ENCODE measurements at regions of chr15 and their contacts with region 1.

Region 1: GRCh38 chr15:68783226-68784058 is 37.3 kb downstream of the ANP32A start:
- DNase-seq: peak; percentile 31
- H3K4me3 Mint-ChIP-seq: no peak overlapping the region
- H3K27ac Mint-ChIP-seq: peak overlapping the region; percentile 87
- H3K4me1 Mint-ChIP-seq: peaks cover 49% of the 10 kb centered on the region
- H3K27me3 Mint-ChIP-seq: no peaks in the 10 kb centered on the region

Region 2: GRCh38 chr15:68730471-68730919 is 52.9 kb before region 1 on chr15:
- intact Hi-C with region 1: loop called (anchors 5 kb)
- DNase-seq: no peak
- H3K4me3 Mint-ChIP-seq: no peak overlapping the region
- H3K27ac Mint-ChIP-seq: no peak overlapping the region
- H3K4me1 Mint-ChIP-seq: peaks cover 5% of the 10 kb centered on the region
- H3K27me3 Mint-ChIP-seq: peaks cover 11% of the 10 kb centered on the region

Region 3: DNA sequence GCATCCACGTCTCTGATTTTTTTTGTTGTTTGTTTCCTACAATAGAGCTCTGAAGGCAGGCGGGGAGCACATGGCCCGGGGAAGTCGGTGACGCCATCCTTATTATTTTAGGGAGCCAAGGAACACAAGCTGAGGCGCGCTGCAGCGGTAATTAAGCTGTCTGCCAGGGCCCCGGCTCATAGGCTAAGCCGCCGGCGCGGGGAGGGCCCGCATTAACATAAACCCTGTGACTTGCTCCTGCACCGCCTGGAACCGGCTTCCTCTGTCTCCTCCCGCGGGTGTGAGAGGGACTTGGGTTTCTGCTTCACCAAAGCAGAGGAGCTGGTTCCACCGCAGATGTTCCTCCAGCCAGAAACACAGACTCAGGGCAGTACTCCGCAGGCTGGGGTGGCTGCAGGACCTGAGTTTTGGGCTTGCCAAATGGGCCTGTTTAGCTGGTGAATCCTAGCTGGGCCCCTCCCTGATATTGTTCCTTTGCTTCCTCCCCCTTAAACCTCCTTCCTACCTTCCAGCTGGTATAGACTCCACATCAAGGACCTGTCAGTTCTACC is 11.9 kb after region 1 on chr15:
- intact Hi-C with region 1: loop called (anchors 1 kb)
- DNase-seq: peak; percentile 73
- H3K4me3 Mint-ChIP-seq: peak overlapping the region; percentile 73
- H3K27ac Mint-ChIP-seq: peak overlapping the region; percentile 87
- H3K4me1 Mint-ChIP-seq: peaks cover 98% of the 10 kb centered on the region
- H3K27me3 Mint-ChIP-seq: no peaks in the 10 kb centered on the region

Region 4: DNA sequence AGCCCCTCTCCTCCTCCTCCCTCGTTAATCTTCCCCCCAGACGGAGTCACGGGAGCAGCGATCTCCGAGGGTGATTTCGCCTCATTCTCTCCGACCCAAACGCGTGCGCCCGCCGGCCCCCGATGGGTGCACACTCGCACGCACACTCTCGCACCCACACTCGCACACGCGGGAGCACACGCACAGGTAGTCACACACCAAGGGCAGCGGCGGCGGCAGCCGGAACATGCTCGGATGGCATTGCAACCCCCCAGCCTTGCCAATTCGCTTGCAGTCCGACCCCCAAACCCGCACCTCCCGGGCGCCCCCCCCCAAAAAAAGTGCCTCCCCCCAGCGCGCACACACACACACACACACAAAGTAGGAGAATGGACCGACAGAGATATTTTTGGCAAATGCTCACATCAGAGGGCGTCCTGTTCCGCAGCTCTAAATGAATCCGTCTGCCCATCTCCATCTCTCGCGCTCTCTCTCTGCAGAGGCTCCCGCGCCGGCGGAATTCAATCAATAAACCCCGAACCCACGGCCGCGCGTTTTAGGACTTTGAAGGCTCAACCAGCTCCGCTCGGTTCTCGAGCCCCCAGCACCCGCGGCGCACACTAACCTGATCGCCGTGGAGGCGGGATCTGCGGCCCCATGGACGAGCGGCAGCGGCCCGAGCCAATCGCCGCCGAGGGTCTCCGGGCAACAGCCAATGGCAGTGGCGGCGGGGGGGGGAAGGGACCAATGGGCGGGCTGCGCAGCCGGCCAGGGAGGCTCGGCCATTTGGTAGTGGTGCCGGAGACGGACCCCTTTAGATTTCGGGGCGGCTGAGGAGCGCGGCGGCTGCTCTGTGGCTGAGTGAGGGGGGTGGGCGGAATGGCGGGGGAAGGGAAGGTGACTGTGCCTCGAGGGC is 37.1 kb after region 1 on chr15 and contains the start of gene ANP32A:
- intact Hi-C with region 1: loop called (anchors 1 kb)
- DNase-seq: peak; percentile 94
- H3K4me3 Mint-ChIP-seq: peak within 1 kb of the TSS; percentile 98
- H3K27ac Mint-ChIP-seq: peak within 1 kb of the TSS; percentile 100
- H3K4me1 Mint-ChIP-seq: peaks cover 40% of the 10 kb centered on the region
- H3K27me3 Mint-ChIP-seq: no peaks in the 10 kb centered on the region
- total RNA-seq, gene ANP32A: 275 TPM in 2 replicates

Region 5: GRCh38 chr15:68829068-68829467 is 45.6 kb after region 1 on chr15:
- intact Hi-C with region 1: loop called (anchors 2 kb)
- DNase-seq: no peak
- H3K4me3 Mint-ChIP-seq: no peak overlapping the region
- H3K27ac Mint-ChIP-seq: no peak overlapping the region
- H3K4me1 Mint-ChIP-seq: peaks cover 21% of the 10 kb centered on the region
- H3K27me3 Mint-ChIP-seq: peaks cover 5% of the 10 kb centered on the region

Measured in activated T-helper 1 cell treated with anti-CD3 and anti-CD28 coated beads, Interleukin-12 subunit alpha, Interleukin-12 subunit beta, Interleukin-2, Interleukin-4 antibody, amounts not matched to agents 30 ng/mL and 10 ng/mL and 1 ng/mL, durations not matched to agents 14 hours and 24 hours and 36 hours (primary cell).